ENCODE measurements at regions of chr12 and their contacts with region 1.

Region 1: GRCh38 chr12:11347810-11348209 is 37.6 kb upstream of the PRB4 start:
- DNase-seq: no peak
- ATAC-seq: no peak
- H3K4me3 ChIP-seq: no peak overlapping the region
- H3K27ac ChIP-seq: no peak overlapping the region
- H3K4me1 ChIP-seq: no peaks in the 10 kb centered on the region
- H3K27me3 ChIP-seq: no peaks in the 10 kb centered on the region
- CTCF ChIP-seq: peak in 3 of 9 donors; percentile 10 to 40 (median 12)

Region 2: GRCh38 chr12:11397366-11397765 is 49.6 kb after region 1 on chr12:
- intact Hi-C with region 1: loop called in 1 of 10 experiments (anchors 2 kb)
- DNase-seq: no peak
- ATAC-seq: no peak
- H3K4me3 ChIP-seq: no peak overlapping the region
- H3K27ac ChIP-seq: no peak overlapping the region
- H3K4me1 ChIP-seq: no peaks in the 10 kb centered on the region
- H3K27me3 ChIP-seq: no peaks in the 10 kb centered on the region
- CTCF ChIP-seq: no peak

Region 3: GRCh38 chr12:12606781-12607589 is 1259.2 kb after region 1 on chr12:
- intact Hi-C with region 1: no loop called
- DNase-seq: no peak
- ATAC-seq: no peak
- H3K4me3 ChIP-seq: no peak overlapping the region
- H3K27ac ChIP-seq: peak overlapping the region in 2 of 10 donors; percentile 43 to 75
- H3K4me1 ChIP-seq: peaks cover 0 to 30% (median 4%) of the 10 kb centered on the region in 9 donors
- H3K27me3 ChIP-seq: peaks cover 0 to 3% (median 0%) of the 10 kb centered on the region in 7 donors
- CTCF ChIP-seq: no peak